ENCODE measurements at regions of chr2 and their contacts with region 1.

Region 1: GRCh38 chr2:74876081-74876886 is 42.4 kb downstream of the HK2 start:
- DNase-seq: peak; percentile 20
- ATAC-seq: peak; percentile 98
- H3K4me3 ChIP-seq: no peak overlapping the region
- H3K27ac ChIP-seq: no peak overlapping the region
- H3K4me1 ChIP-seq: no peaks in the 10 kb centered on the region
- H3K27me3 ChIP-seq: no peaks in the 10 kb centered on the region
- CTCF ChIP-seq: peak; percentile 37 to 68 (median 58); a peak in 5 of 6 replicates
- EP300 ChIP-seq: no peak
- POLR2A ChIP-seq: no peak
- RAD21 ChIP-seq: peak; percentile 77

Region 2: DNA sequence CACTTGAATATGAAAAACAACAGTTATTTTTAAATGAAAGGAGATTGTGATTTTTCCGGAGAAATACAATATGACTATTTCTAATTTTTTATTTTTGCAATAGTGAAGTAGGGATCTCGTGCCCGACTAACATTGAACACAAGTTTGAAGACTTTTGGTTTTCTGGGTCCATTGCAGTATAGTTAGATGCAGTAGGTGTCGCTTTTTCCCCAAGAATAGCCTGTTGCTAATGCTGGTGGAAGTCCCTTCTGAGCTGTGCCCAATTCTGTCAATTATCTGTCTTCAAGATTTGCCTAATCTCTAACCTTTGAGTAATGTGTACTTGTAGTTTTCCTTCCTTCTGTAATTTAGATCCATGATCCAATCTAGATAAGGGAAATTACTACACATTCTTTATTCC is 185.7 kb before region 1 on chr2:
- CTCF ChIA-PET with region 1: interaction called, 29 read pairs
- POLR2A ChIA-PET with region 1: no interaction called
- RAD21 ChIA-PET with region 1: interaction called, 12 read pairs
- SMC1A ChIA-PET with region 1: interaction called, 19 read pairs
- in situ Hi-C with region 1: no loop called
- intact Hi-C with region 1: loop called (anchors 1 kb)
- DNase-seq: peak; percentile 28
- ATAC-seq: peak; percentile 95
- H3K4me3 ChIP-seq: no peak overlapping the region
- H3K27ac ChIP-seq: no peak overlapping the region
- H3K4me1 ChIP-seq: no peaks in the 10 kb centered on the region
- H3K27me3 ChIP-seq: peaks cover 0 to 2% of the 10 kb centered on the region in 2 experiments; a peak in 1 of 4 replicates
- CTCF ChIP-seq: peak; percentile 71 to 92 (median 72)
- EP300 ChIP-seq: no peak
- POLR2A ChIP-seq: no peak
- RAD21 ChIP-seq: peak; percentile 94

Region 3: GRCh38 chr2:74715078-74715791 is 161.0 kb before region 1 on chr2:
- CTCF ChIA-PET with region 1: interaction called, 111 read pairs
- POLR2A ChIA-PET with region 1: no interaction called
- RAD21 ChIA-PET with region 1: interaction called, 6 read pairs
- SMC1A ChIA-PET with region 1: interaction called, 39 read pairs
- in situ Hi-C with region 1: no loop called
- intact Hi-C with region 1: loop called (anchors 1 kb)
- DNase-seq: peak; percentile 48
- ATAC-seq: peak; percentile 97
- H3K4me3 ChIP-seq: peak overlapping the region; percentile 71
- H3K27ac ChIP-seq: no peak overlapping the region
- H3K4me1 ChIP-seq: no peaks in the 10 kb centered on the region
- H3K27me3 ChIP-seq: peaks cover 4 to 6% of the 10 kb centered on the region in 2 experiments; a peak in 2 of 4 replicates
- CTCF ChIP-seq: peak; percentile 87 to 94 (median 90)
- EP300 ChIP-seq: no peak
- POLR2A ChIP-seq: no peak
- RAD21 ChIP-seq: peak; percentile 86

Region 4: DNA sequence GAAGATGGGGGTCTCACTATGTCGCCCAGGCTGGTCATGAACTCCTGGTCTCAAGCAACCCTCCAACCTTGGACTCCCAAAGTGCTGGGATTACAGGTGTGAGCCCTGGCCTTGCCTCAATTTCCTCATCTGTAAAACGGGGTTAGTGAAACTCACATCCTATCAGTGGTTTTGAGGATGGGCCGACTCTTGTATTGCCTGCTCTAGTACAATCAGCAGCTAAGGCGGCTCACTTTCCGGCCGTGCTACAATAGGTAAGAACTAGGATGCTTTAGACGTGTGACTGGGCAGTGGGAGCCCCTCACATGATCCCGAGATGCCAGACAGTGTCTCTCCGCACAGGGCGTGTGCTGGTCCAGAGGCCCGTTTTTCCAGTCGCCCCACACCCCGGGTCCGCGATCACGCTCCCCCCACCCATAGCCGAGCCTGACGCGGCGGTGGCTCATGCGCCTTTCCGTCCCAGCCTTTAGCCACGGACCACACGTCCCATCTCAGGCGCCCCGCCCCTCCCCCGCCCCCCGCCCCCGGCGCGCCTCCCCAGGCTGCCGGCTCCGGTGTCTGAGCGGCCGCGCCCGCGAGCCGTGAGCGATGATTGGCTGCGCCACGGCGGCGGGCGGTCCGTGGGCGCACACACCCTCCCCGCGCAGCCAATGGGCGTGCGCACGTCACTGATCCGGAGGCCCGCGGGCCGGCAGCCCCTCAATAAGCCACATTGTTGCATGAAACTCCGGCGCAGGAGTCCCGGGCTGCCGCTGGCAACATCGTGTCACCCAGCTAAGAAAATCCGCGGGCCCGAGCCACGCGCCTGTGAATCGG is 42.7 kb before region 1 on chr2 and contains the start of gene HK2:
- CTCF ChIA-PET with region 1: interaction called, 67 read pairs
- POLR2A ChIA-PET with region 1: no interaction called
- RAD21 ChIA-PET with region 1: interaction called, 27 read pairs
- SMC1A ChIA-PET with region 1: interaction called, 47 read pairs
- in situ Hi-C with region 1: no loop called
- intact Hi-C with region 1: loop called (anchors 2 kb)
- DNase-seq: peak; percentile 70
- ATAC-seq: peak; percentile 88
- H3K4me3 ChIP-seq: peak within 1 kb of the TSS; percentile 76
- H3K27ac ChIP-seq: peak within 1 kb of the TSS; percentile 73
- H3K4me1 ChIP-seq: peaks cover 11% of the 10 kb centered on the region
- H3K27me3 ChIP-seq: no peaks in the 10 kb centered on the region
- CTCF ChIP-seq: no peak
- EP300 ChIP-seq: no peak
- POLR2A ChIP-seq: peak; percentile 73
- RAD21 ChIP-seq: no peak
- polyA plus RNA-seq, gene HK2: 5.0 to 6.4 TPM

Region 5: DNA sequence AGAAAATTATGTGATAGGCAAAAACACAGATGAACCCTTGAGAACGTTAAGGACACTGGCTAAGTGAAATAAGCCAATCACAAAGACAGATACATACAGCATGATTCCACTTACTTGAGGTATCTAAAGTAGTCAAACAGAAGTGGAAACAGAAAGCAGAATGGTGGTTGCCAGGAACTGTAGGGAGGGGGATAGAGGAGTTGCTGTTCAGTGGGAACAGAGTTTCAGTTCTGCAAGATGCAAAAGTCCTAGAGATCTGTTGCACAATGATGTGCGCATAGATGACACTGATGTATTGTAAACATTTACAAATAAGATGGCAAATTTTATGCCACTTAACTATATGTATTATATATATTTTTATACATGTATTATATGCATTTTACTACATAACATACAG is 141.9 kb after region 1 on chr2:
- CTCF ChIA-PET with region 1: no interaction called
- POLR2A ChIA-PET with region 1: no interaction called
- RAD21 ChIA-PET with region 1: no interaction called
- SMC1A ChIA-PET with region 1: no interaction called
- in situ Hi-C with region 1: no loop called
- intact Hi-C with region 1: no loop called
- DNase-seq: no peak
- ATAC-seq: 0 out of 3 replicates have a peak, but pooled peaks have one; percentile 18
- H3K4me3 ChIP-seq: no peak overlapping the region
- H3K27ac ChIP-seq: no peak overlapping the region
- H3K4me1 ChIP-seq: no peaks in the 10 kb centered on the region
- H3K27me3 ChIP-seq: no peaks in the 10 kb centered on the region
- CTCF ChIP-seq: no peak
- EP300 ChIP-seq: no peak
- POLR2A ChIP-seq: no peak
- RAD21 ChIP-seq: no peak

Region 6: DNA sequence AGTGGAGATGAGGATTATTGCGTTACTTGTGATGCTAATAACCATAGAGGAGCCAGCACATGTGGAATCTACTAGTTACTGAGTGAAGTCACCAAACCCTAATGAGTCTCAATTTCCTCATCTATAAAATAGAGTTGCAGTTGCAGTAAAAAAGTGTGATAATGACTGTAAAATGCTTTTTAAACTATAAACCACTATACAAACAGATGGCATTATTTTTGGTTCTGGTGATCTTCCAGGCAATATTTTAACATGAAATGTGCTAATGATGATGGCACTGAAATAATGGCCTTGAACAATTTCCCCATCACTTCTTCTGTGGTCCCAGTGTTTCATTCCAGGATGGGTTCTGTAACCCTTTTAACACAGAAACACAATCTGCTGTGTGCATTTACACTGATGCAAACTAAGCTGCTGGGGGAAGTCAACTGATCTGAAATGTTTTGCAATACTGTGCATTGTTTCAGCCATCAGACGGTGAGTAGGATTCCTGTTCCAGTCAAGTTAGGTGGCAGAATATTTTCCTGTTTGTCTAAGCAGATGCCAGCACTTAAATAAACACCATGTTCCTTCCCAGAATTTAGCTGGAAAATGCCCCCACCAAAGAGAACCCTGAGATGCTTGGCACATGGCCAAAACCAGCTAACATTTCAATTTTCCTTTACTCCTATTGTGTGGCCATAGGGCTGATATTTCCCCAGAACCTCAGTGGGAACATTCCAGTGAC is 270.5 kb after region 1 on chr2:
- CTCF ChIA-PET with region 1: no interaction called
- POLR2A ChIA-PET with region 1: no interaction called
- RAD21 ChIA-PET with region 1: no interaction called
- SMC1A ChIA-PET with region 1: no interaction called
- in situ Hi-C with region 1: no loop called
- intact Hi-C with region 1: no loop called
- DNase-seq: no peak
- ATAC-seq: no peak
- H3K4me3 ChIP-seq: no peak overlapping the region
- H3K27ac ChIP-seq: no peak overlapping the region
- H3K4me1 ChIP-seq: no peaks in the 10 kb centered on the region
- H3K27me3 ChIP-seq: no peaks in the 10 kb centered on the region
- CTCF ChIP-seq: no peak
- EP300 ChIP-seq: no peak
- POLR2A ChIP-seq: no peak
- RAD21 ChIP-seq: no peak

Region 7: GRCh38 chr2:75920859-75921551 is 1044.7 kb after region 1 on chr2:
- CTCF ChIA-PET with region 1: no interaction called
- POLR2A ChIA-PET with region 1: no interaction called
- RAD21 ChIA-PET with region 1: no interaction called
- SMC1A ChIA-PET with region 1: no interaction called
- in situ Hi-C with region 1: no loop called
- intact Hi-C with region 1: no loop called
- DNase-seq: no peak
- ATAC-seq: no peak
- H3K4me3 ChIP-seq: no peak overlapping the region
- H3K27ac ChIP-seq: no peak overlapping the region
- H3K4me1 ChIP-seq: no peaks in the 10 kb centered on the region
- H3K27me3 ChIP-seq: no peaks in the 10 kb centered on the region
- CTCF ChIP-seq: no peak
- EP300 ChIP-seq: no peak
- POLR2A ChIP-seq: no peak
- RAD21 ChIP-seq: no peak